PC-9 (cell line): ENCODE measurements at regions of chr11 and their contacts with region 1.

Region 1: DNA sequence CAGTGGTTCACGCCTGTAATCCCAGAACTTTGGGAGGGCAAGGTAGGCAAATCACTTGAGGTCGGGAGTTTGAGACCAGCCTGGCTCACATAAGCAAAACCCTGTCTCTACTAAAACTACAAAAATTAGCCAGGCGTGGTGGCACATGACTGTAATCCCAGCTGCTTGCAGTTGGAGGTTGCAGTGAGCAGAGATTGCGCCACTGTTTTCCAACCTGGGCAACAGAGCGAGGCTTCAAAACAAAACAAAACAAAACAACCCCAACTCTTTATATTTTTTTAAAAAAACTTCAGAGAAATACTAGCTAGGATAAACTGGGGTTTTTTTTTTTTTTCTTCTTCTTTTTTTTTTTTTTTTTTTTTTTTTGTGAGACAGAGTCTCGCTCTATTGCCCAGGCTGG is 31.8 kb upstream of the RAPSN start:
- DNase-seq: no peak
- H3K4me3 ChIP-seq: no peak overlapping the region
- H3K27ac ChIP-seq: no peak overlapping the region
- H3K4me1 ChIP-seq: no peaks in the 10 kb centered on the region
- H3K27me3 ChIP-seq: no peaks in the 10 kb centered on the region
- CTCF ChIP-seq: no peak

Region 2: GRCh38 chr11:47466701-47467250 is 14.0 kb before region 1 on chr11:
- CTCF ChIA-PET with region 1: no interaction called
- POLR2A ChIA-PET with region 1: no interaction called
- intact Hi-C with region 1: no loop called
- DNase-seq: peak; percentile 67 to 75
- H3K4me3 ChIP-seq: no peak overlapping the region
- H3K27ac ChIP-seq: peak overlapping the region; percentile 5; the same call in 1 of the 2 replicates
- H3K4me1 ChIP-seq: peaks cover 22% of the 10 kb centered on the region
- H3K27me3 ChIP-seq: no peaks in the 10 kb centered on the region
- CTCF ChIP-seq: no peak

Region 3: DNA sequence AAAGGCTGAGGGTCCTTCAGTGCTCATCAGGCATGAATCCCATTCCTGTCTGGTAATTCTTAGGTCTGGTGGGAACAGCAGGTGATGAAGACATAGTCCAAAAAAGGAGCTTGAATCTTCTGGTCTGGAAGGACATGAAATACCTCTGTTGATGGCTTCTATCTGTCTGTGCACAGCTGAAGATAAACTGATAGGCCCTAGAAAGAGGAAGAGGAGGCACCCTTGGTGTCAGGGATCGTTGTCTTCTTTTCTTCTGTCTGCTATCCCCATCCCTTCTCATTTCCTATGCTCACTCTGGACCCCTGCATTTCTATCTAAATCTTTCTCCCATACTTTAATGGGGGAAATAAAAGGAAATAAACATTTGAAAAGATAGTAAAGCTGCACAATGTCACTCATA is 225.0 kb after region 1 on chr11:
- CTCF ChIA-PET with region 1: no interaction called
- POLR2A ChIA-PET with region 1: interaction called, 10 read pairs
- intact Hi-C with region 1: no loop called
- DNase-seq: no peak
- H3K4me3 ChIP-seq: no peak overlapping the region
- H3K27ac ChIP-seq: no peak overlapping the region
- H3K4me1 ChIP-seq: no peaks in the 10 kb centered on the region
- H3K27me3 ChIP-seq: no peaks in the 10 kb centered on the region
- CTCF ChIP-seq: no peak